ENCODE measurements at regions of chr6 and their contacts with region 1.

Region 1: DNA sequence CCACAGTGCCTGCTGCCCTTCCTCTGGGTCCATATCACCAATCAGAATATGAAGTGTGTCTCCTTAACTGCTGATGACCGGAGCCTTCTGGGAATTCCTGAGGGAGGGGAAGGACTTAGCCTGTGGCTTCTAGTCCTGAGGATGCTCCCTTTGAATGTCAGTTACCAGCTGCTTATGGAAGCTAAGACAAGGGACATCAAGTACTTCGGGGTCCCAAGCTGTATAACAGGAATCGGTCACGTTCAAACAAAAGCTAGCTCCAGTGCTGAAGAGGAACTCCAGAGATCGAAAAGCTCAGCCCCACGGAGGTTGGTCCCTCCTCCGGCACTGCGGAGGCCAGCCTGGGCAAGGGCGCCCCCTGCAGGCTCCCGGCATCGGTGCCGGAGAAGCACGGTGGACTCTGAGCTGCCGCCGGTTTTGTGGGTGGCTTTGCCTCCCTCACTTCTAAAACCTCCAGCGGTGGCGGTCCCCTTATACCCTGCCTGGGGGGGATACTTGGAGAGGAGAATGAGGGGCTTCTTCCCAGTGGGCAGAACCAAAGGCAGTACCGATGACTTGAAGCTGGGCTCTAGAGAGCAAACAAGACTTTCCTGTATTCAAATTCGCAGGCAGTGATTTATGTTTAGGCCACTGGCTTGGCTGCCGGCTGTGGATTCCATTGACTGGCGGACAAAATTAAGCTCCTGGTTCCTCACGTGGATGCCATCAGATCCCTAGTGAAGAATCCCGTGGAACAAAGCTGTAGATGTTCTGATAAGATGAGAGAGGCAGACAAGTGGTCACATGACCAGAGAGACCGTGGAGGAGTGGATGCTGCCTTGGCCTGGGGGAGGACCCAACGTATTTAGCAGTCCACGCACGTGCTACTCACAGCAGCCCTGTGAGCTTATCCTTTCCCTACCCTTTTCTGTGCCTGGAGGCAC is 16.2 kb upstream of the UBR2 start:
- DNase-seq: peak; percentile 75
- H3K4me3 Mint-ChIP-seq: peak overlapping the region; percentile 77
- H3K27ac Mint-ChIP-seq: peak overlapping the region; percentile 84
- H3K4me1 Mint-ChIP-seq: peaks cover 22% of the 10 kb centered on the region
- H3K27me3 Mint-ChIP-seq: no peaks in the 10 kb centered on the region
- CTCF ChIP-seq: peak; percentile 92

Region 2: DNA sequence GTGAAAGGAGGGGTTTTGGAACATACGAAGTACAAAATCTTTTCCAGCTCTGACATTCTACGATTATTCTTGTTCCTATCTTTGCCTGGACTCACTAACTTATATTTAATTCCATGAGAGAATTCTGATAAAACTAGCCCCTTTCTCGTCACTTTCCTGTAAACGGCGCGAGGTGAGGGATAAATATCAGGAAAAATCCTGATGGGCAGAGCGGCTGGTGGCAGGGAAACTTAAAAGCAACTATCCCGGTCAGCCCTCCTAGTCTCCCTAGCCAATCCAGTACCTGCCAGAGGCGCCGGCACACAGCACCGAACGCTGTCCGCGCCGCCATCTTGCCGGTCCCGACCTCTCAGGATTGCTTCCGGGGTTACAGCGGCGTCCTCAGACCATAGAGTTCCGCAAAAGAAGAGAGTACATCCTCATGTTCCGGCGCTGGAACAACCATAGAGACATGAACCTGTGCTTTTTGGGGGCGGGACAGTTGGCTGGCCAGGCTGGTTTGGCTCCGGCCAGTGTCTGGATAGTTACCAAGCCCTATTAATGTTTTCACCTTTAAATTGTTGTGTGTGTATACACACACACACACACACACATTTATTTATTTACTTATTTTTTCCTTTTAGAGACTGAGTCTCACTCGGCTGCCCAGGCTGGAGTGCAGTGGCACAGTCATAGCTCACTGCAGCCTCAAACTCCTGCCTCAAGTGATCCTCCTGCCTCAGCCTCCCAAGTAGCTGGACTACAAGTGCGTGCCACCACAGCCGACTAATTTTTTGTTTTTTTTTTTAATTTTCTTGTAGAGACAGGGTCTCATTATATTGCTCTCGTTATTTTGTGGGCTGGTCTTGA is 329.9 kb before region 1 on chr6 and contains the start of gene MRPS10:
- CTCF ChIA-PET with region 1: interaction called, 34 read pairs
- POLR2A ChIA-PET with region 1: interaction called, 8 read pairs
- intact Hi-C with region 1: loop called (anchors 2 kb)
- DNase-seq: peak; percentile 95
- H3K4me3 Mint-ChIP-seq: peak within 1 kb of the TSS; percentile 98
- H3K27ac Mint-ChIP-seq: peak within 1 kb of the TSS; percentile 98
- H3K4me1 Mint-ChIP-seq: peaks cover 10% of the 10 kb centered on the region
- H3K27me3 Mint-ChIP-seq: no peaks in the 10 kb centered on the region
- CTCF ChIP-seq: no peak
- total RNA-seq, gene MRPS10: 62.9 and 67.3 TPM in 2 replicates

Region 3: GRCh38 chr6:42230345-42231321 is 317.0 kb before region 1 on chr6:
- CTCF ChIA-PET with region 1: interaction called, 28 read pairs
- POLR2A ChIA-PET with region 1: interaction called, 11 read pairs
- intact Hi-C with region 1: no loop called
- DNase-seq: peak; percentile 36
- H3K4me3 Mint-ChIP-seq: no peak overlapping the region
- H3K27ac Mint-ChIP-seq: peak overlapping the region; percentile 13
- H3K4me1 Mint-ChIP-seq: peaks cover 39% of the 10 kb centered on the region
- H3K27me3 Mint-ChIP-seq: no peaks in the 10 kb centered on the region
- CTCF ChIP-seq: peak; percentile 43

Region 4: GRCh38 chr6:42260972-42261371 is 286.7 kb before region 1 on chr6:
- CTCF ChIA-PET with region 1: interaction called, 25 read pairs
- POLR2A ChIA-PET with region 1: no interaction called
- intact Hi-C with region 1: loop called (anchors 1 kb)
- DNase-seq: peak; percentile 26
- H3K4me3 Mint-ChIP-seq: no peak overlapping the region
- H3K27ac Mint-ChIP-seq: peak overlapping the region; percentile 70
- H3K4me1 Mint-ChIP-seq: peaks cover 9% of the 10 kb centered on the region
- H3K27me3 Mint-ChIP-seq: no peaks in the 10 kb centered on the region
- CTCF ChIP-seq: peak; percentile 70

Region 5: DNA sequence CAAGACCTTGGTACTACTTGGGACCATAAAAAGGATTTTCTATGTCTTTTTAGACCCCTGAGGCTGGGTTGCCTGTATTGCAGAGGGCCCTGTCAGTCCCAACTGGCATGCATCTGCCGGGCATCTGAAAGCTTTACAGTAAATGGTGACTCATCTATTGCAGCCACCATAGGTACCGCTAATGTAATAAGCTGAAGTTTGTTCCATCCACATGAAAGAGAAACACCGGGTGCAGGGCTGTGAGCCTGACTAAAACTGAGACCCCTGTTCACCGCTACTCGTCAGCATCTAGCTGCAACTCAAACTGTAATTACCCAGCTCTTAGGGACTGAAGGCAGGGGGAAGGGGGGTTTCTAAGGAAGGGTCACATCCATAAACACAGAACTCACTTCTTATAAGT is 145.5 kb before region 1 on chr6:
- CTCF ChIA-PET with region 1: interaction called, 36 read pairs
- POLR2A ChIA-PET with region 1: interaction called, 18 read pairs
- intact Hi-C with region 1: loop called (anchors 1 kb)
- DNase-seq: peak; percentile 82
- H3K4me3 Mint-ChIP-seq: peak overlapping the region; percentile 70
- H3K27ac Mint-ChIP-seq: peak overlapping the region; percentile 74
- H3K4me1 Mint-ChIP-seq: peaks cover 63% of the 10 kb centered on the region
- H3K27me3 Mint-ChIP-seq: no peaks in the 10 kb centered on the region
- CTCF ChIP-seq: no peak

Region 6: GRCh38 chr6:42532038-42532669 is 15.5 kb before region 1 on chr6:
- CTCF ChIA-PET with region 1: interaction called, 43 read pairs
- POLR2A ChIA-PET with region 1: interaction called, 5 read pairs
- intact Hi-C with region 1: no loop called
- DNase-seq: peak; percentile 74
- H3K4me3 Mint-ChIP-seq: no peak overlapping the region
- H3K27ac Mint-ChIP-seq: no peak overlapping the region
- H3K4me1 Mint-ChIP-seq: no peaks in the 10 kb centered on the region
- H3K27me3 Mint-ChIP-seq: no peaks in the 10 kb centered on the region
- CTCF ChIP-seq: peak; percentile 79

Region 7: GRCh38 chr6:42563697-42564505 is 16.2 kb after region 1 on chr6 and contains the start of gene UBR2:
- CTCF ChIA-PET with region 1: interaction called, 20 read pairs
- POLR2A ChIA-PET with region 1: interaction called, 11 read pairs
- intact Hi-C with region 1: no loop called
- DNase-seq: peak; percentile 99
- H3K4me3 Mint-ChIP-seq: peak within 1 kb of the TSS; percentile 79
- H3K27ac Mint-ChIP-seq: peak within 1 kb of the TSS; percentile 81
- H3K4me1 Mint-ChIP-seq: peaks cover 18% of the 10 kb centered on the region
- H3K27me3 Mint-ChIP-seq: no peaks in the 10 kb centered on the region
- CTCF ChIP-seq: no peak
- total RNA-seq, gene UBR2: 20.1 and 23.2 TPM in 2 replicates